HEK293 (cell line): ENCODE measurements at regions of chr12 and their contacts with region 1.

Region 1: DNA sequence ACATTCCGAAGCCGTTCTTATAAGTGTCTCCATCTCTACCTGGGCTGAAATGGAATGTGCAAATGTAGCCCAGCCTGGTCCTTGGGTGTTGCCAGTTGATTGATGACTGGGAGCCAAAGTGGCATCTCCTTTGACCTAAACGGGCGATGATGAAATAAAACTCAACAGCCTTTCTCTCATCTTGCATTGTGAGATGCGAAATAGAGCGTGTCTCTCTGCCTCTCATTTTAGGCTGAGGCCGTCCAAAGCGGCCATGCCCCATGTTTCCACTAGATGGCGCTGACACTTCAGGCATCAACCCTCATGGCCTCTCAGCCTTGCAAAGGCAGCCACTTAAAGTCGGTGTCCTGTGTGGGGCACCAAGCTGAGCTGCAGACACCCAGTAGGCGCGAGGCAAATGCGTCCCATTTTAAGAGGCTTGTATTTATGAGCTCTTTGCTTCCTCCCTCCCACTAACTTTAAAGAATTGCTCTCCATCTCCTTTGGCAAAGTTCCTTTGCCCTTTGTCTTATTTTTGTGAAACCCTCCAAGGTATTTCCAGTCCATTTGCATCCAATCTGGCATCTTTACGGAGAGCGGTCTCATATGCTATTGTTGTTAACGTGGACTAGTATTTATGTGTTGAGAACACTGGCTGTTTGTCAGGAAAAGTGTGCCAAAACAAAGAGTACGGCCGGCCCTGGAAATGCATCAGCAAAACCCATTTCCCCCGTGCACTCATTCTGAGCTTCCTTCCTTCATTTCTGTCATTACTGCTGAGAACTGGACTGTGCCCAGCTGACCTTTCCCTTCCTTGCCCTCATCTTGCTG is 25.0 kb downstream of the GPRC5A start:
- H3K4me3 ChIP-seq: no peak overlapping the region
- H3K27ac ChIP-seq: no peak overlapping the region
- H3K4me1 ChIP-seq: peaks cover 6% of the 10 kb centered on the region; the same call in 1 of the 2 replicates
- CTCF ChIP-seq: peak; percentile 95

Region 2: GRCh38 chr12:12859690-12860089 is 56.6 kb before region 1 on chr12:
- CTCF ChIA-PET with region 1: no interaction called
- POLR2A ChIA-PET with region 1: no interaction called
- H3K4me3 ChIP-seq: no peak overlapping the region
- H3K27ac ChIP-seq: no peak overlapping the region
- H3K4me1 ChIP-seq: peaks cover 4% of the 10 kb centered on the region; the same call in 1 of the 2 replicates
- CTCF ChIP-seq: no peak

Region 3: DNA sequence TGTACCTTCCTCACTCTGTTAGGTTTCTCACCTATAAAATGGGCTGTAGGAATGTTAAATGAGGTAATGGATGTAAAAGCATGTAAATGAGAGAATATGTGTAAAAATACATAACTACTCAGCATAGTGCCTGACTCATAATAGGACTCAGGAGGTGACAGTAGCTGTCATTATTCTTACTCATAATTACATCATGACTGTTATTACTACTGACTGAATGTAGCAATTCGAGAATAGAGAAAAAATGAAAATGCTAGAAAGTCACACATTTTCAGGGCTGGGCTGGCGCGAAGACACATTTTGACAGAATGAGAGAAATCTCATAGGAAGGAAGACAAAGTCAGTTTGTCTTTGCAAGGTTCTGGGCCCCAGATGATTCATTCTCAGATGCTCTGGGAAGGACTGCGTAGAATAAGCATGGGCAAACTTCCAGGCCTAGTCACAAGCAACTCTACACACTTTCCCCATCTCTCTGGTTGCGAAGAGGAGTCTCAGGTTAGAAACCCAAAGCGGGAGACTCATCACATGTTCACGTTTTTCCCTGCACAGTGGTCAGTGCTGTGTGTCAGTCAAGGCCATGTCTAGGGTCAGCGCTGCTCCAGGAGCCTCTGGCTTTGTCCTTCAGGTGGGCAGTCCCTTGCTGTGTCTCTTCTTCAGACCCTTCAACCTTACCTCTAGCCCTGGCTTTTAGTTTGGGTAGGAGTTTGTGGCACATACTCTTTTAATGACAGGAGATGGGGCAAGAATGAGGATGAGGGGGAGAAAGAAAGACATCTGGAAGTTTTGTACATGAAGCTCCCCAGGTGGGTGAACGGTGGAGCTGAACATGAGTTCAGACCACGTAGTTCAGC is 16.6 kb before region 1 on chr12:
- CTCF ChIA-PET with region 1: interaction called, 13 read pairs
- POLR2A ChIA-PET with region 1: no interaction called
- H3K4me3 ChIP-seq: no peak overlapping the region
- H3K27ac ChIP-seq: peak overlapping the region; percentile 72
- H3K4me1 ChIP-seq: peaks cover 17% of the 10 kb centered on the region
- CTCF ChIP-seq: no peak

Region 4: DNA sequence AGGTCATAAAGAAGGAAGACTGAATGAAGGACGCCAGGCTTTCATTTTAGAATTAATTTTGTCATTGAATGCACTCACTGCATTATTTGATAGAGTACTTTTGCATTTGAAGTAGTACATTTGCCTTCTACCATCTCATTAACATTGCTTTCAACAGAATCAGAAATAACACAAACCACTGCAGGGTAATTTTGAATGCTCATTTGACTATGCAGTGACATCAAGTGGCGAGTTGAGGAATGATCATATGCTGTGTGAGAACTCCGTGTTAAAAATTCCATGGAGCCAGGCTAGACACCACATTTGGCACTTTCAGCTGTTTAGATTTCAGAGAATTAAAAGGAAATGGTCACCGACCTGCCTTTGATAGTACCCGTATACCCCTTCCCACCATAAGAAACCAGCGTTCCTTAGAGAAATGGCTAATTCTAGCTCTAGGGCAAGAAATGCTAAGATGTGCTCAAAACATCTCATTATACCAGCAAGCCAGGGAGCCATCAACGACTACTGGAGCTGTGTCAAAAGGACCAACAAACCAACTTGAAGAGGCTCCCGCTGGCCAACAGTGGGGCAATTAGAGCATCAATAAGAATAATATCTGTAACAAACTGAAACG is 67.2 kb after region 1 on chr12:
- CTCF ChIA-PET with region 1: interaction called, 39 read pairs
- POLR2A ChIA-PET with region 1: no interaction called
- H3K4me3 ChIP-seq: no peak overlapping the region
- H3K27ac ChIP-seq: no peak overlapping the region
- H3K4me1 ChIP-seq: no peaks in the 10 kb centered on the region
- CTCF ChIP-seq: no peak